ENCODE measurements at regions of chr9 and their contacts with region 1.

Region 1: DNA sequence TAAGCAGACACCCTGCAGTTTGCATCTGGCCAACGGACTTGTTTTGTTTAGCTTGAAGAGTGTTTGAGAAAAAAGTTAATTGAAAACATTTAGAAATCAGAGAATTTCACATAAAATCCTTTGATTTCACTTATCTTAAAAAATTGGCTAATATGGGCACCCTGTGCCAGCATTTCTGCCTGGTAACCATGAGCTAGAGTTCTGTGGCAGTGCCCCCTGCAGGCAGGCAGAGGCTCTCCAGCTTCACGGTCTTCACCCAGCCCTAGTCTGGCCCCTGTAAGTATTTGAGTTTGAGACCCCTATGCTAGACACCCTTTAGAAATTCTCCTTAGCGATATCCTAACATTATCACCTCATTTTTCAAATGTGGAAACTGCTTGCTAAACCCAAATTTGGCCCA is 18.8 kb upstream of the FANCC start:
- DNase-seq: no peak

Region 2: DNA sequence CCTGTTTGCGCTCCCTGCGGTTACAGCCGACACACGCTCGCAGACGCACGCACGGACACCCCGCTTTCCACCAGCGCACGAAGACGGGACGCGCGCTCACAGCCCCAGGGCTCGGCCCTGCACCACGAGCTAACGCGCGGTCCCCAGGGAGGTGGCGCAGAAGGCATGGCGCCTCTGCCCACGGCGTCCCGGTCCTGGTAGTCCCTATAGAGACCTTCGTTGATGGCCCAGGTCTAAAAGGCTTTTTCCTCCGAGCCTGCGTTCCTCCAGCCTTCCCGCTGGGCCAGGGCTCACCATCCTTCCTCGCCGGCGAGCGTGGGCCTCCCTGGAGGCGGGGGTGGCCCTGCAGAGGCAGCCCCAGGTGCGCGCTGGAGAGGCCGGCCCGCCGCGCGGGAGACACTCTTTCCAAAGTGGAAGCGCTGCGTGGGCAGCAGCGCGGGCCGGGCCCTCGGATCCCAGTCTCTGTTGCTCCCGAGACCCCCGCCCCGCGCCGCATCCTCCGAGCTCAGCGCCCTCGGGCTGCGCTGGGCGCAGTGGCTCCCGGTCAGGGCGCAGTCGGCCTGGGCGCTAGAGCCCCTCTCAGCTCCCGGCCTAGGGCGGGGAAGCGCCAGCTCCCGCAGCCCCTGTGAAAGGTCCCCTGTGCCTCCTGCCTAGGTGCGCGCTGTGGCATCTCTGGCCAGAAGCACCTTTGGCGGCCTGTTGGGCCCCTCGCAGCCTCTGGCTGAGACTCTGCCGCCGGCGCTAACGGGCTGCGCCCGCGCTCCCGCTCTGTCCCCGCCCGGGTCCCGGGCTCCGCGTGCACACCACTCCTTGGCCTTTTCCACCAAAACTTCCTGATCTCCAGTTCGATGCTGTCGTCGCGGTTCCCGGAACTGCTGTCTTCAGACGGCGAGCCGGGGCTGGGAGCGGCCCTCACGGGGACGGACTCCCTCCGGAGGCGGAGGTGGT is 13.1 kb after region 1 on chr9:
- intact Hi-C with region 1: loop called in 1 of 2 experiments (anchors 1 kb)
- DNase-seq: peak; percentile 78